Heart right ventricle (tissue), 16 donors: ENCODE measurements at regions of chr10 and their contacts with region 1.

Region 1: GRCh38 chr10:125060826-125061556 is 99.4 kb downstream of the CTBP2 start:
- DNase-seq: peak; percentile 84 to 86
- ATAC-seq: peak; percentile 51 to 77 (median 68)
- H3K4me3 ChIP-seq: peak overlapping the region in 7 of 10 donors; percentile 4 to 36 (median 29)
- H3K27ac ChIP-seq: peak overlapping the region; percentile 2 to 92 (median 70)
- H3K4me1 ChIP-seq: peaks cover 65 to 100% (median 100%) of the 10 kb centered on the region in 9 donors
- H3K27me3 ChIP-seq: no peaks in the 10 kb centered on the region
- CTCF ChIP-seq: peak; percentile 73 to 94 (median 84)

Region 2: DNA sequence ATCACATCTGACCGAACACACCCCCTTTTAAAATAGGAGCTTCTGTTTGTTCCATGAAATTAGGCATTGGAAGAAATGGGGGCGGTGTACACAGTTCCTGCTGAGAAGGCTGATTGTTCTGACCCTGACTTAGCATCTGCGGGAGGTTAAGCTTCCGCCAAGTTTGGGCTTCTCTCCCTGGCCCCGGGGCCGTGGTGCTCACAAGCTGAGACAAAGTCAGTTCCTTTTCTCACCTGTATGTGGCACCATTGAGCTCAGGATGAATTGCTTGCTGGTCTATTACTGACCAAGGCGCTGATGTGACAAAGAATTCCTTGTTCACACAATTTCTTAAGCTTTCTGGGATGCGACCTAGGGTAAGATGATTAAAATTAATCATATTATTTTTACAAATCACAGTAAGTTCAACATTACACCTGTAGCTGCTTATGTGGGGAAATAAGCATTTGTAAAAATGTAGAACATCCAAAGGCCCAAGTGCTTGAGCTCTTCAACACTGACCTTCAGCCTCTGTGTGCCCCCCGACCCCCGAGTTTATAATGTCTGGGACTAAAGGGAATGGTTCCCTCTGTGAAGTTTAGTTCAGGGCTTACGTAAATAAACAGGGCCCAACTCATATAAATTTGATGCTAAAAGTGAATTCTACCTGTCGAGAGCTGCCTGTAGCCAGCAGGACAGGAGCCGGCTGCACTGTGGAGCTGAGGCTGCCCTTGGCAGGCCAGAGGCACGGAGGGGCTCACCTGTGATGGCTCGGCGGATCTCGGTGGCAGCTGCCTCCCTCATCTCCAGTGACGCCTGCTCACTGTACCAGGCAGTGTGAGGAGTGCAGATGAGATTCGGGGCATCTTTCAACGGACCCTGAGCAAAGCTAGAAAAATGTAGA is 68.3 kb before region 1 on chr10:
- intact Hi-C with region 1: loop called in 6 of 10 experiments (anchors 2 to 10 kb)
- DNase-seq: peak; percentile 38 to 90
- ATAC-seq: peak; percentile 39 to 90 (median 76)
- H3K4me3 ChIP-seq: no peak overlapping the region
- H3K27ac ChIP-seq: peak overlapping the region in 1 of 10 donors; percentile 4
- H3K4me1 ChIP-seq: peaks cover 0 to 29% (median 5%) of the 10 kb centered on the region in 9 donors
- H3K27me3 ChIP-seq: no peaks in the 10 kb centered on the region
- CTCF ChIP-seq: peak; percentile 59 to 87 (median 79)

Region 3: DNA sequence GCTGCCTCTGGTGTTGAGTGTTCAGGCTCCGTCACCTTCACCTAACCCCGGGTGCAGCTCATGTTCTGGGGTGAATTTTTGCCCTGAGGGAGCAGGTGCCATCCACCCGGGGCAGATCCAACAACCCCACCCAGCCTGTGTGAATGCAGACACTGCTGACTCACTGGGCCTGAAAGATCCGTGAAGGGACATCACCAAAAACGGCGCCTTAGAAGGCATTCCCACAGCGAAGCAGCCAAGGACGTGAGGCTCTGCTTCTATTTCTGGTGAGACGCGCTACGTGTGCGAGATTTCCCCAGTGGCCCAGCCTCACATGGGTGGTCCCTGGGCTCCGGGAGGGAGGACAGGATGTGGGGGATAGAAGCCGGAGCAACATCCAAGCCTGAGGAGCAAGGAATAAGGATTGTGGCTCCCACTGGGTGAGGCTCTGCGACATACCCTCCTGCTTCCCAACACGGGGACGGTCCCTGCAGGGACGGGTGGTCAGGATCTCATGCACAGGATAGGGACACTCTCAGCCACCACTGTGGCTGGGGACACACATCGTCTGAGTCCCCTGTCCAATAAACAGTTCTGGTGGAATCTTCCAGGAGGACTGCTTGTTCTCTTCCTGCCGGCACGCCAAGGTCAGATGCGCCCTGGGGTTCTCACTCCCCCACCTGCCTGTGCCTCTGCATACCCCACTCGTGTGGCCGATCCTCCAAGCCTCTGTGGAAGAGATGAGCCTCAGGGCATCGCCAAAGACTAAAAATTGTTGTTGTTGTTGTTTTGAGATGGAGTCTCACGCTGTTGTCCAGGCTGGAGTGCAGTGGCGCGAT is 48.9 kb before region 1 on chr10:
- intact Hi-C with region 1: loop called in 3 of 10 experiments (anchors 5 to 10 kb)
- DNase-seq: peak in 1 of 2 donors; percentile 70
- ATAC-seq: peak; percentile 32 to 58 (median 49)
- H3K4me3 ChIP-seq: no peak overlapping the region
- H3K27ac ChIP-seq: peak overlapping the region; percentile 35 to 85 (median 68)
- H3K4me1 ChIP-seq: peaks cover 50 to 94% (median 74%) of the 10 kb centered on the region in 9 donors
- H3K27me3 ChIP-seq: no peaks in the 10 kb centered on the region
- CTCF ChIP-seq: no peak

Region 4: GRCh38 chr10:125123476-125124114 is 62.6 kb after region 1 on chr10:
- intact Hi-C with region 1: loop called in 1 of 10 experiments (anchors 5 kb)
- DNase-seq: peak; percentile 86 to 87
- ATAC-seq: peak; percentile 82 to 94 (median 86)
- H3K4me3 ChIP-seq: peak overlapping the region in 7 of 10 donors; percentile 5 to 38 (median 23)
- H3K27ac ChIP-seq: peak overlapping the region; percentile 48 to 91 (median 78)
- H3K4me1 ChIP-seq: peaks cover 21 to 97% (median 78%) of the 10 kb centered on the region in 9 donors
- H3K27me3 ChIP-seq: no peaks in the 10 kb centered on the region
- CTCF ChIP-seq: peak in 1 of 9 donors; percentile 12

Region 5: DNA sequence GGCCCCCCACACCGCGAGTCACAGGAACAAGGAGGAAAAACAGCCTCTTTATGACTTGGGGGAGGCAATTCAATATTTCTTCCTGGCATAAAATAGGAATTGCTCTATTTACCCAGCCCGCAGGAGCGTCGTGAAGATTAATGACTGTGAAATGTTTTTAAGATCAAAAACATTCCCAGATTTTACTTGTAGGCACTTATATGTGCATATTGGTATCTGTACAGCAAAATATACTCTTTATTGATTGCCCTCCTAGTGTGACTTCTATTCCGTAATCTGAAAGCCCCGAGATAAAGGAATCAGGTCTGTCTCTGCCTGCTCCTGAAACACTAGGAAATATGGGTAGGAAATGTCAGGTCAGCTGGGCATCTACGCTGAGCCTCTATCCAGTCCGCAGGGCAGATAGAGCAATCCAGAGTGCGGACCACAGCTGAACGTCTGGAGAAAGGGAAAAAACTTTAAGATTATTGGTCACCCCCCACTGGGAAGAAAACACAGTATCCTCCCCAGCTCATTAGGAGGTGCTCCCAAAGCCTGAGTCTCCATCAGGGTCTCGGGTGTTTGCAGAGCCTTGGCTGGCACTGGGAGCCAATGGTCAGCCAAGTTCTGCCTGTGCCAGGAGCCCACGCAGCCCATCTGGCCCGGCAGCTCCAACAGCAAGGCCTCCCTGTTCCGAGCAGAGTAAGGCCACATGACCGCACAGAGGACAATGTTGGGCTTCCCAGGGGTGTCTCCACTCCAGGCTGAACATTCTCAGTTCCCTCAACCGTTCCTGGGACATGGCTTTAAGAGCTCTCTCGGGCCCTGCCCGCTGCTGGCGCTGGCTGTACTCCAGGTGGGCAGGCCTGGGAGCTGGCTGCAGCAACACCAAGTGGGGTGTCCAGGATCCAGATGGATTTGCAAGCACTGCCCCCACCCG is 91.7 kb after region 1 on chr10:
- intact Hi-C with region 1: loop called in 5 of 10 experiments (anchors 5 kb)
- DNase-seq: peak; percentile 65 to 76
- ATAC-seq: peak; percentile 56 to 93 (median 74)
- H3K4me3 ChIP-seq: peak overlapping the region in 2 of 10 donors; percentile 0 to 37
- H3K27ac ChIP-seq: peak overlapping the region in 9 of 10 donors; percentile 39 to 98 (median 67)
- H3K4me1 ChIP-seq: peaks cover 49 to 100% (median 85%) of the 10 kb centered on the region in 9 donors
- H3K27me3 ChIP-seq: no peaks in the 10 kb centered on the region
- CTCF ChIP-seq: peak in 1 of 9 donors; percentile 23

Region 6: GRCh38 chr10:125633517-125633999 is 572.6 kb after region 1 on chr10:
- intact Hi-C with region 1: no loop called
- DNase-seq: no peak
- ATAC-seq: no peak
- H3K4me3 ChIP-seq: no peak overlapping the region
- H3K27ac ChIP-seq: no peak overlapping the region
- H3K4me1 ChIP-seq: no peaks in the 10 kb centered on the region
- H3K27me3 ChIP-seq: peaks cover 0 to 20% (median 6%) of the 10 kb centered on the region in 7 donors
- CTCF ChIP-seq: no peak

Region 7: GRCh38 chr10:126433351-126433750 is 1372.4 kb after region 1 on chr10:
- intact Hi-C with region 1: no loop called
- DNase-seq: no peak
- ATAC-seq: no peak
- H3K4me3 ChIP-seq: no peak overlapping the region
- H3K27ac ChIP-seq: no peak overlapping the region
- H3K4me1 ChIP-seq: no peaks in the 10 kb centered on the region
- H3K27me3 ChIP-seq: peaks cover 0 to 35% (median 5%) of the 10 kb centered on the region in 7 donors
- CTCF ChIP-seq: no peak